Posterior vena cava (tissue), 2 donors: ENCODE measurements at regions of chr18 and their contacts with region 1.

Region 1: DNA sequence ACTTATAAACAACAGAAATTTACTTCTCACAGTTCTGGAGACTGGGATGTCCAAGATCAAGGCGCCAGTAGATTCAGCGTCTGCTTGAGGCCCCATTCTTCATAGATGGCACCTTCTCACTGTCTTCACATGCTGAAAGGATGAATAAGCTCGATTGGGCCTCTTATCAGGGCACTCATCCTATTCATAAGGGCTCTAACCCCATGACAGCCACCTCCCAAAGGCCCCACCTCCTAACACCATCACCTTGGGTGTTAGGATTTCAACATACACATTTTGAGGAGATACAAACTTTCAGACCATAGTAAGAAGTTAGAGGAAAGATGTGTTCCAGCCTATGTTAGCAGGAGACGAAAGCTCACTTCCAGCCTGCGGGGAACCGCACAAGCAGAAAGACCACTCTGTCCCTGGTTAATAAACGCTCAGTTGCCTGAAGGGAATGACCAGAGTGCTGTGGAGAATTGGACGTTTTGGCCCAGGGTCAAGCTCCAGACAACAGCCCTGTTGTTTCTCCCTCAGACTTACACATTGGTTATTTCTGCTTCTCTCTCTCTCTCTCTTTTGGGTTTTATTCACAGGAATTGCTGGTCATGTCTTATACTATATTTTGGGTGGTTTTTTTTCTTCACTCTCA is 90.3 kb downstream of the MAPRE2 start:
- DNase-seq: no peak

Region 2: GRCh38 chr18:35005963-35006577 is 125.4 kb before region 1 on chr18:
- intact Hi-C with region 1: loop called (anchors 5 to 10 kb)
- DNase-seq: no peak

Region 3: DNA sequence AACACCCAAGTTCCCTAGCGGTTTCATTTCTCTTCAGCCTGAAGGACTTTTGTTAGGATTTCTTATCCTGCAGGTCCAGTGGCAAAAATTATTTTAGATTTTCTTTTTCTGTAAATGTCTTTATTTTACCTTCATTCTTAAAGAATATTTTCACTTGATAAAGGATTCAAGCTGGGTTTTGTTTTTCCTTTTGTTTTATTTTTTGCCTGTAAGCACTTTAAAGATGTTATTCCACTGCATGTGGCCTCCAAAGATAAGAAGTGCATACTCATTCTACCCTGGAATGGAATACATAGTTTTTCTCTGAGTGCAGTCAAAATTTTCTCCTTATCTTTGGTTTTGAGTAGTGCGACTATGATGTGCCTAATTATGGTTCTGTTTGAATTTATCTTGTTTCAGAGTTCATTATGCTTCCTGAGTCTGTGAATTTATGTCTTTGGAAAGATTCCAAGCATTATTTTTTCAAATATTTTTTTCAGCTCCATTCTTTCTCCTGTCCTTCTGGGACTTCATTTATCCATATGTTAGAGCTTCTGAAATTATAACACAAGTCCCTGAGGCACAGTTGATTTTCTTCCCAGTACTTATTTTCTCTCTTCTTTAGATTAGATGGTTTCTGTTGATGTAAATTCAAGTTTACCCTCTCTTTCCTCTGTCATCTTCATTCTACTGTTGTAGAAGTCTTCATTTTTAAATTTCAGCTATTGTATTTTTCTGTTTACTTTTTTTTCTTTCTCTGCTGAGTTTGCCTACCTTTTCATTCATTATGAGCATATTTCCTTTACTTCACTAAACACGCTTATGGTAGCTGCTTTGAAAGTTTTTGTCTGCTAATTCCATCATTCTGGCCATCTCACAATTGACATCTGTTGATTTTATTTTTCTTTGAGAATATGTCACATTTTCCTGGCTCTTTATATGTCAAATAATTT is 20.7 kb before region 1 on chr18:
- intact Hi-C with region 1: no loop called
- DNase-seq: no peak

Region 4: DNA sequence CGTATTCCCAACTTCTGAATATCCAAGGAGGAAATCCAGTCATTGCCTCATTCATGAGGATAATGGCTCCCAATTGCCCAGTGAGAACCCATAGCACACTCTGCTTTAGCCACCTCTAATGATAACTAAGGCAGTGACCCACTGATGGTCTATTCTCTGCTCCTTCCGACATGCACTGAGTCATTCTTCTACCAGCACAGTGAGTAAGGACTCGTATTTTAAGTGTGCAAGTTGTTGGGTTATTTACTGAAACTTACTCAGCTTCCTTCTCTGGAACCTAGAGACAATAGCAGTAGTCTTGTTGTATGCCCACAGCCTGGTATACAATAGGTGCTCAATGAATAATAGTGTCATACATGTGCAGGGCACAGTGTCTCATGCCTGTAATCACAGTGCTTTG is 28.3 kb after region 1 on chr18:
- intact Hi-C with region 1: loop called in 1 of 2 experiments (anchors 1 kb)
- DNase-seq: no peak

Region 5: GRCh38 chr18:35185771-35186170 is 54.3 kb after region 1 on chr18:
- intact Hi-C with region 1: loop called in 1 of 2 experiments (anchors 2 kb)
- DNase-seq: no peak

Region 6: DNA sequence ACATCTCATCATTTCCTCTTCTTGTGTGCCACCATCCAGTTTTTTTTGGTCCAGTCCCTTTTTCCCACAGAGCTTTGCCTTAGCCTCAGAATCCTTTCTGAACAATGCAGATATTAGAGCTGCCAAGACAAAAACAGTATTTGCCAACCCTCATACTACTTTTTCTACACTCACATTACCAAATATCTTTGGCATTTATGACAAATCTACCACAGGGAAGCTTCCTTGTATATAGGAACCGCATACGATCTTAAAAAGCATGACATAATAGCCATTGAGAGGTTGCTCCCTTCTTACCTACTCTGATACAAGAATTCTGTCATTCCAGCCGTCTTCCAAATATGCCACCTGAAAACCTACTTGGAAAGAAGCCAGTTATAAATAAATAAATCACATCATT is 203.3 kb after region 1 on chr18:
- intact Hi-C with region 1: no loop called
- DNase-seq: no peak

Region 7: DNA sequence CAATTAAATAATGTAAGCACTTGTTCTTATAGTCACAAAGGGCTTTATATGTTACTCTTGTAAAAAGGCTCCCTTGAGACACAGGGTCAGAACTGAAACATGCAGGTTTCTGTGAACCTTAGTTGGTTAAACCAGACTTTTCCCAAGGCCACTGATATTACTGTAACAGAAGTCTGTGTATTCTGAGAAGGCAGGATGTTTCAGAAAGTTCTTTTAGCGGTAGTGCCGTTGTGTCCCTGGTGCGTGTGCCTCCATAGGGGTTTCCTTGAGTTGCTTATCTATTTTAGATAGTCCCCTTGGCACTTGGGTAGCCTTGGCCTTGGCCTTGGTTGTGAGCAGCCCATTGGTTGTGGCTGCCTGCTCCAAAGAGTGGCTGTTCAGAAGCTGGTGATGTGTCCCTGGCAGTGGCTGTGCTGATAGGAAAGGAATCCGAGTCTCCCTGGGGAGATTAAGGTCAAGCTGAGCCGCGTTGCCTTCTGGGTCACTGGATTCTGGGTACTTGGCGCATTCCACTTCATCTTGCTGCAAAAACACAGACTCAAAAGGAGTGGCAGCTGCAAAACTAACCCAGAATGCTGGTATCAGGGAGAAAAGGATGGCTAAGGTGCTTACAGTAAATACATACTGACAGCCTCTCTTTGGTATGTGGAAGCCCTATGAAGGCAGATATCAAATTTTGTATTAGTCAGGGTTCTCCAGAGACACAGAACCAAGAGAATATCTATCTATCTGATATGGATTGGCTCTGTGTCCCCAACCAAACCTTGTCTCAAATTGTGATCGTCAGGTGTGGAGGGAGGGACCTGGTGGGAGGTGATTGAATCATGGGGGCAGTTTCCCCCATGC is 1235.7 kb after region 1 on chr18:
- intact Hi-C with region 1: no loop called
- DNase-seq: peak; percentile 83